MCF 10A (cell line): ENCODE measurements at regions of chr1 and their contacts with region 1.

Region 1: GRCh38 chr1:204806943-204807687 is 63.5 kb upstream of the NFASC start:
- DNase-seq: peak; percentile 94
- H3K4me3 Mint-ChIP-seq: peak overlapping the region; percentile 69
- H3K27ac Mint-ChIP-seq: no peak overlapping the region
- H3K4me1 Mint-ChIP-seq: no peaks in the 10 kb centered on the region
- H3K27me3 Mint-ChIP-seq: peaks cover 25% of the 10 kb centered on the region
- CTCF ChIP-seq: peak; percentile 99

Region 2: DNA sequence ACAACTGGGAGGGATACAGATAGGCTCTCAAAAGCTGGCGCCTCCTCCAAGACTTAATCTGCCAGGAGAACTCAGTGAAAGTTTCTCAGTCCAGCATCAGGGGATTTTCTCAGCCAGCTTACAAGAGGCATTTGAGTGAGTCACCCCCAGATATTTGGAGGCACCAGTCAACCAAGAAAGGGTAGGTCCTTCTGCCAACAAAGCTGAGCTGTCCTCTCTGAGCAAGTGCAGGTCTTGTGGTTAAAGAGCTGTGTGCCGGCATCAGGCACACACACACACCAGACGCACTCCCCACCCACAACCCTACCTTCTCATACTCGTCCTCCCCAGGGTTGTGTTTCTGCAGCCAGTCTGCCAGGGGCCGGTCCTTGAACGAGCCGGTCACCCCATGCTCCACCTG is 368.5 kb before region 1 on chr1:
- CTCF ChIA-PET with region 1: interaction called, 21 read pairs
- POLR2A ChIA-PET with region 1: no interaction called
- intact Hi-C with region 1: no loop called
- DNase-seq: peak; percentile 99
- H3K4me3 Mint-ChIP-seq: peak overlapping the region; percentile 6
- H3K27ac Mint-ChIP-seq: peak overlapping the region; percentile 94
- H3K4me1 Mint-ChIP-seq: peaks cover 65% of the 10 kb centered on the region
- H3K27me3 Mint-ChIP-seq: no peaks in the 10 kb centered on the region
- CTCF ChIP-seq: no peak

Region 3: GRCh38 chr1:204591594-204592051 is 215.5 kb before region 1 on chr1:
- CTCF ChIA-PET with region 1: interaction called, 1,156 read pairs
- POLR2A ChIA-PET with region 1: interaction called, 3 read pairs
- intact Hi-C with region 1: no loop called
- DNase-seq: peak; percentile 62
- H3K4me3 Mint-ChIP-seq: no peak overlapping the region
- H3K27ac Mint-ChIP-seq: no peak overlapping the region
- H3K4me1 Mint-ChIP-seq: peaks cover 11% of the 10 kb centered on the region
- H3K27me3 Mint-ChIP-seq: no peaks in the 10 kb centered on the region
- CTCF ChIP-seq: no peak

Region 4: GRCh38 chr1:204685236-204686006 is 121.7 kb before region 1 on chr1 and contains the start of gene LRRN2:
- CTCF ChIA-PET with region 1: interaction called, 19 read pairs
- POLR2A ChIA-PET with region 1: no interaction called
- intact Hi-C with region 1: no loop called
- DNase-seq: no peak
- H3K4me3 Mint-ChIP-seq: peak within 1 kb of the TSS; percentile 53
- H3K27ac Mint-ChIP-seq: no peak within 1 kb of the TSS
- H3K4me1 Mint-ChIP-seq: no peaks in the 10 kb centered on the region
- H3K27me3 Mint-ChIP-seq: peaks cover 36% of the 10 kb centered on the region
- CTCF ChIP-seq: no peak
- total RNA-seq, gene LRRN2: not detected in 2 replicates

Region 5: DNA sequence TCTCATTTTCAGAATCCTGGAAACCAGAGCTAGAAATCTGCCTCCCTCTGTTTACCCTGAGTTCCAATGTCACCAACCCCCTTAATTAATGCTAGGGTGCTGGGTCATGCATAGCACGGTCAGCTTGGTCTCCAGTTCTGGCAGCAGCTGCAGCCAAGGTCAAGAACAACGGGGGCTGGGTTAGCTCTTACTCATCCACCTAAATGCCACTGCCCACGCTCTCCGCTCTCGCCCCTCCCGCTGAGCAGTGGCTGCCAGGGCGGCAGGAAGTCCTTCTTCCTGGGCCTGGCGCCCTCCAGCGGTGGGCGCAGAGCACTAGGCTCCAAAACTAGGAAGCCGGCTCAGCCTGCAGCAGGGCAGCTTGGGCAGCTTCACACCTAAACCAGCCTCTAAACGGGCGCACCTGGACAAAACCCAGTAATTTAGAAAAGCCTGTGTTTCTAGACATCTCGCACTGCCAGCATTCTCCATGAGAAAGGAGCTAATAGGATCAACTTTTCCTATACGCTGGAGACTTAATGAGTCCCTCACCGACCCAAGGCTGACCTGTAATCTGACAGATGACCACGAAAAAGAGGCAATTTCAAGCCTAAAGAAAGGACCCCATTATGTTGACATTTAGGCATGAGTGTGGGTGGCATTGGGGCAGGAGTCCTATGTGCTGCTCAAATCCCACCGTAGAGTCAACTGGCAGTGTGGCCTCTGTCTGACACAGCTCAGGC is 43.2 kb before region 1 on chr1:
- CTCF ChIA-PET with region 1: interaction called, 55 read pairs
- POLR2A ChIA-PET with region 1: interaction called, 3 read pairs
- intact Hi-C with region 1: loop called (anchors 2 kb)
- DNase-seq: peak; percentile 94
- H3K4me3 Mint-ChIP-seq: no peak overlapping the region
- H3K27ac Mint-ChIP-seq: no peak overlapping the region
- H3K4me1 Mint-ChIP-seq: peaks cover 11% of the 10 kb centered on the region
- H3K27me3 Mint-ChIP-seq: peaks cover 57% of the 10 kb centered on the region
- CTCF ChIP-seq: peak; percentile 98

Region 6: GRCh38 chr1:204896787-204897469 is 89.8 kb after region 1 on chr1:
- CTCF ChIA-PET with region 1: interaction called, 17 read pairs
- POLR2A ChIA-PET with region 1: no interaction called
- intact Hi-C with region 1: no loop called
- DNase-seq: no peak
- H3K4me3 Mint-ChIP-seq: no peak overlapping the region
- H3K27ac Mint-ChIP-seq: no peak overlapping the region
- H3K4me1 Mint-ChIP-seq: peaks cover 5% of the 10 kb centered on the region
- H3K27me3 Mint-ChIP-seq: peaks cover 85% of the 10 kb centered on the region
- CTCF ChIP-seq: no peak

Region 7: GRCh38 chr1:205255941-205256780 is 449.0 kb after region 1 on chr1:
- CTCF ChIA-PET with region 1: interaction called, 57 read pairs
- POLR2A ChIA-PET with region 1: no interaction called
- intact Hi-C with region 1: loop called (anchors 1 kb)
- DNase-seq: peak; percentile 95
- H3K4me3 Mint-ChIP-seq: no peak overlapping the region
- H3K27ac Mint-ChIP-seq: no peak overlapping the region
- H3K4me1 Mint-ChIP-seq: peaks cover 31% of the 10 kb centered on the region
- H3K27me3 Mint-ChIP-seq: no peaks in the 10 kb centered on the region
- CTCF ChIP-seq: peak; percentile 100